ENCODE measurements at regions of chr11 and their contacts with region 1.

Region 1: GRCh38 chr11:122754553-122755322 is 83.6 kb upstream of the CRTAM start:
- DNase-seq: peak; percentile 8
- H3K4me3 Mint-ChIP-seq: no peak overlapping the region
- H3K27ac Mint-ChIP-seq: no peak overlapping the region
- H3K4me1 Mint-ChIP-seq: peaks cover 46% of the 10 kb centered on the region
- H3K27me3 Mint-ChIP-seq: peaks cover 4% of the 10 kb centered on the region

Region 2: DNA sequence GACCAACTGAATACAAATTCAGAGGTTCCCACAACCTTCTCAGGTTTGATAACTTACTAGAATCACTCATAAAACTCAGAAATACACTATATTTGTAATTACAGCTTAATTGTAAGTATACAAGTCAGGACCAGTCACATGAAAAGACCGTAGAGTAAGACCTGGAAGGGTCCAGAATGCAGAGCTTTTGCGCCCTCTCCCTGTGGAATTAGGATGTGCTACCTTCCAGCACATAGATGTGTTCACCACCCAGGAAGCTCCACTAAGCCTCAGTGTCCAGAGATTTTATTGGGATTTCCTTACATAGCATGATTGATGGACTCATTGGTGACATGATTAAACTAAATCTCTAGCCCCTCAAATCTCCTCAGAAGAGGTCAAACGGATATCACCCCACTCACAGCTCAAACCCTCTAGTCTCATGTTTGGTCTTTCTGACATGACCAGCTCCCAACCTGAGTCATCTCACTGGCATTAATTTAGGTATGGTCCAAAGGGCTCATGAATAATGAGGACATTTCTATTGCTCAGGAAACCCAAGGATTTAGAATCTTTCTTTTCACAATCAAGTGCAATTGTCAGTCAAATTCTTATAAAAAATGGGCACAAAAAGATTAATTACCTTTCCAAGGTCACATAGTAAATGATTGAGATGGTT is 176.4 kb before region 1 on chr11:
- intact Hi-C with region 1: loop called (anchors 1 kb)
- DNase-seq: no peak
- H3K4me3 Mint-ChIP-seq: no peak overlapping the region
- H3K27ac Mint-ChIP-seq: no peak overlapping the region
- H3K4me1 Mint-ChIP-seq: peaks cover 12% of the 10 kb centered on the region
- H3K27me3 Mint-ChIP-seq: peaks cover 7% of the 10 kb centered on the region

Region 3: GRCh38 chr11:122628810-122629555 is 125.8 kb before region 1 on chr11:
- intact Hi-C with region 1: loop called (anchors 1 kb)
- DNase-seq: peak; percentile 34
- H3K4me3 Mint-ChIP-seq: no peak overlapping the region
- H3K27ac Mint-ChIP-seq: no peak overlapping the region
- H3K4me1 Mint-ChIP-seq: peaks cover 4% of the 10 kb centered on the region
- H3K27me3 Mint-ChIP-seq: peaks cover 5% of the 10 kb centered on the region

Region 4: GRCh38 chr11:122655527-122656072 is 99.1 kb before region 1 on chr11 and contains the start of gene UBASH3B:
- intact Hi-C with region 1: loop called (anchors 1 kb)
- DNase-seq: peak; percentile 48
- H3K4me3 Mint-ChIP-seq: peak within 1 kb of the TSS; percentile 94
- H3K27ac Mint-ChIP-seq: peak within 1 kb of the TSS; percentile 88
- H3K4me1 Mint-ChIP-seq: peaks cover 13% of the 10 kb centered on the region
- H3K27me3 Mint-ChIP-seq: peaks cover 65% of the 10 kb centered on the region
- total RNA-seq, gene UBASH3B: 17.9 and 18.3 TPM in 2 replicates

Region 5: DNA sequence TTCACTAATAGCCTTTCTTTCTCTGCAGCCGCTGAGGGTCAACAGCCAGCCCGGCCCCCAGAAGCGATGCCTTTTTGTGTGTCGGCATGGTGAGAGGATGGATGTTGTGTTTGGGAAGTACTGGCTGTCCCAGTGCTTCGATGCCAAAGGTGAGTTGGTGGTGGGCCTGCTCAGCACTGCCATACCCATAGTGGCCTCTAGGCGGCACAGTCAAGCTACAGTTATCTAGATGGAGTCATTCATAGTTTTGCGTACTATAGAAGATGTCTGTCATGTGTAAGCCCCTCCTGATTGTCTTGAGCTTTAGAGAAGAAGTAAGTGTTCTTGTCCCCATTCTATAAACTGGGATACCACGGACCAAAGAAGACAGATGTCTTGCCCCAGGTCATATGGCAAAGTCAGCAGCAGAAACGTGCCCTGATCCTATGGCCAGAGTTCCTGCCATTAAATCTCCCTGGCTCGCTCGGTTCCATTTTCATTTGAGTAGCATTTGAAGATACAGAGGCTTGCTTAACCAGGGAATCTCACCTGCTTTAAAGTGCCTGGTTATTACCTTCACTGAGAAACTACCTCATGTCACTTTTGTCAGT is 41.5 kb after region 1 on chr11:
- intact Hi-C with region 1: no loop called
- DNase-seq: peak; percentile 33
- H3K4me3 Mint-ChIP-seq: no peak overlapping the region
- H3K27ac Mint-ChIP-seq: no peak overlapping the region
- H3K4me1 Mint-ChIP-seq: no peaks in the 10 kb centered on the region
- H3K27me3 Mint-ChIP-seq: peaks cover 5% of the 10 kb centered on the region

Region 6: GRCh38 chr11:122882857-122883645 is 128.3 kb after region 1 on chr11:
- intact Hi-C with region 1: no loop called
- DNase-seq: peak; percentile 36
- H3K4me3 Mint-ChIP-seq: peak overlapping the region; percentile 84
- H3K27ac Mint-ChIP-seq: peak overlapping the region; percentile 75
- H3K4me1 Mint-ChIP-seq: peaks cover 28% of the 10 kb centered on the region
- H3K27me3 Mint-ChIP-seq: peaks cover 9% of the 10 kb centered on the region

Measured in activated T-helper 1 cell treated with anti-CD3 and anti-CD28 coated beads, Interleukin-12 subunit alpha, Interleukin-12 subunit beta, Interleukin-2, Interleukin-4 antibody, amounts not matched to agents 30 ng/mL and 10 ng/mL and 1 ng/mL, durations not matched to agents 14 hours and 24 hours and 36 hours (primary cell).